ENCODE measurements at regions of chr3 and their contacts with region 1.

Region 1: GRCh38 chr3:143287403-143287802 is 167.8 kb downstream of the CHST2 start:
- DNase-seq: no peak
- H3K4me3 Mint-ChIP-seq: no peak overlapping the region
- H3K27ac Mint-ChIP-seq: no peak overlapping the region
- H3K4me1 Mint-ChIP-seq: no peaks in the 10 kb centered on the region
- H3K27me3 Mint-ChIP-seq: no peaks in the 10 kb centered on the region

Region 2: DNA sequence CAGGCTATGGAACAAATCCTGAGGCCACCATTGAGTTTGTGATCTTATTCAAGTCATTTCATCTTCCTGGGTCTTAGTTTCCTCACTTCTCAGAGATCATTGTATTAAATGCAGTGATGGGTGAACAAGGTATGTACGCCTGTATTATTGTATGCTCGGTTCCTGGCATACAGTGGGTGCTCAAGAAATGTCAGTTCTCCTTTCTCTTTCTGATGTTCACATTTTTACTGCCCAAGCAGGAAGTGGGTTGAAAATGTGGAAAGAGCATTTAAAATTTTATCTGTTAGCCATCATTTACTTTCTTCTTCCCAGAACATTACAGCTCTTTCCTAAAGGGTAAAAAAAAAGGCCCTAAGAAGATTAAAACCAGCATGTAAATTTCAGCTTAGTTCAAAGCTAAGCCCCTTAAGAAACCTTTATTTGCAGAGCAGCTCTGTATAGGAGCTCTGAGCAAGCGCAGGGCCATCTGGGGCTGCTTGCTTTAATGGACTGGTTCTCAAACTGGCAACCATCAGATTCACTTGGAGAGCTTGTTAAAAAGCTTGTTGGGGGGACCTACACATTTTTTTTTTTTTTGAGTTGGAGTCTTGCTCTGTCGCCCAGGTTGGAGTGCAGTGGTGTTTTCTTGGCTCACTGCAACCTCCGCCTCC is 11.6 kb after region 1 on chr3:
- CTCF ChIA-PET with region 1: interaction called, 18 read pairs
- POLR2A ChIA-PET with region 1: no interaction called
- DNase-seq: no peak
- H3K4me3 Mint-ChIP-seq: no peak overlapping the region
- H3K27ac Mint-ChIP-seq: peak overlapping the region; percentile 39
- H3K4me1 Mint-ChIP-seq: peaks cover 40% of the 10 kb centered on the region
- H3K27me3 Mint-ChIP-seq: no peaks in the 10 kb centered on the region